ENCODE measurements at regions of chr1 and their contacts with region 1.

Region 1: GRCh38 chr1:207828485-207829158 is 76.8 kb downstream of the CD46 start:
- DNase-seq: peak; percentile 63
- H3K4me3 Mint-ChIP-seq: no peak overlapping the region
- H3K27ac Mint-ChIP-seq: peak overlapping the region; percentile 95
- H3K4me1 Mint-ChIP-seq: peaks cover 93% of the 10 kb centered on the region
- H3K27me3 Mint-ChIP-seq: peaks cover 2% of the 10 kb centered on the region

Region 2: DNA sequence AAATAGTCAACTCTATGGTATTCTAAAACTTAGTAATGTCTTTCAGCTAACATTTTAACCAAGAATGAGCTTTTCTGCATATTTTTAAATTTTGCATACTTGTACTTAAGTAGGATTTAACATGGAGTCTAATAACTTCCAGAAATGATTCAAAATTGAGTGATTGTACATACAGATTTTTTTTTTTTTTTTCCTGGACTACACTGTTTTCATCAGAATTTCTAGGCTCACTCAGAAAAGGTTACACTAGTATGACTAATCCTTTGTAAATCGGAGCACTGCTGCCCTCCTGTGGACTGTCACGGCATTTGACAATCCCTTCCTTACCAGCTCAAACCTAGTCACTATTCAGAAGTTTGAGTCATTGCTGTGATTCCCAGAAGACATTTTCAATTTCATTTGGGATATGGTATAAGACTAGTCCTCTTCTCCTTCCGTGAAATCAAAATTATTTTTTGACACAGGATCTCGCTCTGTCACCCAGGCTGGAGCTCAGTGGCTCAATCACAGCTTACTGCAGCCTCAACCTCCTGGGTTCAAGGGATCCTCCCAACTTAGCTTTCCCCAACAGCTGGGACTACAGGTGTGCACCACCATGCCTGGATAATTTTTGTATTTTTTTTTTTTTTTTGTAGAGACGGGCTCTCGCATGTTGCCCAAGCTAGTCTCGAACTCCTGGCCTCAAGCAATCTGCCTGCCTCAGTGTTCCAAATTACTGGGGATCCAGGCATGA is 31.2 kb before region 1 on chr1:
- CTCF ChIA-PET with region 1: interaction called, 10 read pairs
- POLR2A ChIA-PET with region 1: no interaction called
- DNase-seq: peak; percentile 83
- H3K4me3 Mint-ChIP-seq: no peak overlapping the region
- H3K27ac Mint-ChIP-seq: no peak overlapping the region
- H3K4me1 Mint-ChIP-seq: peaks cover 35% of the 10 kb centered on the region
- H3K27me3 Mint-ChIP-seq: no peaks in the 10 kb centered on the region

Region 3: DNA sequence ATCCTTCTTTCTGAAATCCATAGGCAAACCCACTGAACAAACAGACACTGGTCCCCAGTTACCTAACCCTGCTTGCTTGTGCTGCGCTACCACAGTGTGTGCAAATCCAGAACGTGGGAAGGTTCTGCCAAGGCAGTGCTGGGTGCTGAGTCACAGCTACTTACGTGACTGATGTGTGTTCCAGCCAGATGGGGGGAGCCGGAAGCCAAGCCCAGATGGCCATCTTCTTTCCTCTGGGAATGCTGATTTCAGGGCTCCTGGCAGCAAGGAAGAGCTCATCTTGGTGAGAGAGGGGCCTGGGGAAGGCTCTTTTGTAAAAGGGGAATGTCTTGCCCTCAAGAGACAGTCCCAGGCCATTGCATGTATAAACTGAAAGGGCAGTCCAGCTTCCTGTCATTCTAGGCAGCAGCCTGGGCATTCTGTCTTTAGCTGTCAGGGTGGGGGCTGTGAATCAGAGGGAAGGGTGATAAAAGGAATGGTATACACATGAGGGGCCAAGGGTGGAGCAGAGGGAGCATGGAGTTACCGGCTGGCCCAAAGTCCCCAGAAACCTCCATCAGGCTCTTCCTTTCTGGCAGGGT is 22.7 kb before region 1 on chr1:
- CTCF ChIA-PET with region 1: interaction called, 17 read pairs
- POLR2A ChIA-PET with region 1: no interaction called
- DNase-seq: peak; percentile 2
- H3K4me3 Mint-ChIP-seq: no peak overlapping the region
- H3K27ac Mint-ChIP-seq: peak overlapping the region; percentile 77
- H3K4me1 Mint-ChIP-seq: peaks cover 45% of the 10 kb centered on the region
- H3K27me3 Mint-ChIP-seq: no peaks in the 10 kb centered on the region

Region 4: GRCh38 chr1:207811920-207812720 is 16.5 kb before region 1 on chr1:
- CTCF ChIA-PET with region 1: interaction called, 17 read pairs
- POLR2A ChIA-PET with region 1: no interaction called
- DNase-seq: no peak
- H3K4me3 Mint-ChIP-seq: no peak overlapping the region
- H3K27ac Mint-ChIP-seq: no peak overlapping the region
- H3K4me1 Mint-ChIP-seq: peaks cover 56% of the 10 kb centered on the region
- H3K27me3 Mint-ChIP-seq: no peaks in the 10 kb centered on the region

Region 5: DNA sequence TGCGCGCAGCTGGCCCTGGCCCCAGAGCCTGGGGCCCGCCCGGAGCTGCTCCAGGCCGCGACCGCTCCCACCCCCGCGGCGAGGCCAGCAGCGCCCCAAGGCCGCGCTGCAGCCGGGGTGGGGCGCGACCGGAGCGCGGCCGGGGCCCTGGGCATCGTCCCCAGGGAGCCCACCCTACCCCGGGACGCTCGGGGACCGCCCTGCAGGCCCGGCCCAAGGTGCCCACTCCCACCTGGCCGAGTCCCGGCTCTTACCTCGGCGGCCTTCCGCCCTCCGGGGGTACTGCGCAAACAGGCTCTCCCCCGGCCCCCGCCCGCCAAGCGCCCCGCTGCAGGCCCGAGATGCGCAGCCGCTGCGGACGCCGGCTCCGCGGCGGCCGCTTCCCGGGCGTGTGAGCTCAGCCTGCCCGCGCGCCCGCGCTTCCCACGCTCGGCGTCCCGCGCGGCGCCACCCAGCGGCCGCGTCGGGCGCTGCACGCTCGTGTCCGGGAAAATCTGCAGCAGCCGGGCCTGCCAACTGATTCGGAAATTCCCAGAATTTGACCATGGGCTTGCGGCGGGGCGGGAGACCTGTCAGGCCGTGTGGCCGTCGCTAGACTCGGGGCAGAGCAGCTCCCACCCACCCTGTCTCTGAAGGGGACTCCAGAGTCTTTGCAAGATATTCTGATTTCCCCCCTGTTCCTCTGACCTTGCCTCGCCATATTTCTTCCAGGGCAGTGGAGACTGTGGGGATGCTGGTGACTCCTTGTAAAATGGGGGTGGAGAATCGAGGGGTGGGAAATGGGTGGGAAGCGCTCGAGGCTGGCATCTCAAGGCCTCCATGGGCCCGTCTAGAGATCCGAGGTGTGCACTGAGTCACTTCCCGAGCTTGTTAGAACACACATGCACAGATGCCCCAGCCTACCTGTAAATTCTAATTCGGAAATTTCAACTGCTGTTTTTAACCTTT is 40.4 kb after region 1 on chr1:
- CTCF ChIA-PET with region 1: interaction called, 39 read pairs
- POLR2A ChIA-PET with region 1: interaction called, 5 read pairs
- DNase-seq: peak; percentile 57
- H3K4me3 Mint-ChIP-seq: peak overlapping the region; percentile 93
- H3K27ac Mint-ChIP-seq: peak overlapping the region; percentile 95
- H3K4me1 Mint-ChIP-seq: peaks cover 85% of the 10 kb centered on the region
- H3K27me3 Mint-ChIP-seq: no peaks in the 10 kb centered on the region

Region 6: GRCh38 chr1:207885129-207886032 is 56.8 kb after region 1 on chr1:
- CTCF ChIA-PET with region 1: interaction called, 33 read pairs
- POLR2A ChIA-PET with region 1: no interaction called
- DNase-seq: peak; percentile 76
- H3K4me3 Mint-ChIP-seq: no peak overlapping the region
- H3K27ac Mint-ChIP-seq: peak overlapping the region; percentile 98
- H3K4me1 Mint-ChIP-seq: peaks cover 40% of the 10 kb centered on the region
- H3K27me3 Mint-ChIP-seq: peaks cover 2% of the 10 kb centered on the region

Region 7: DNA sequence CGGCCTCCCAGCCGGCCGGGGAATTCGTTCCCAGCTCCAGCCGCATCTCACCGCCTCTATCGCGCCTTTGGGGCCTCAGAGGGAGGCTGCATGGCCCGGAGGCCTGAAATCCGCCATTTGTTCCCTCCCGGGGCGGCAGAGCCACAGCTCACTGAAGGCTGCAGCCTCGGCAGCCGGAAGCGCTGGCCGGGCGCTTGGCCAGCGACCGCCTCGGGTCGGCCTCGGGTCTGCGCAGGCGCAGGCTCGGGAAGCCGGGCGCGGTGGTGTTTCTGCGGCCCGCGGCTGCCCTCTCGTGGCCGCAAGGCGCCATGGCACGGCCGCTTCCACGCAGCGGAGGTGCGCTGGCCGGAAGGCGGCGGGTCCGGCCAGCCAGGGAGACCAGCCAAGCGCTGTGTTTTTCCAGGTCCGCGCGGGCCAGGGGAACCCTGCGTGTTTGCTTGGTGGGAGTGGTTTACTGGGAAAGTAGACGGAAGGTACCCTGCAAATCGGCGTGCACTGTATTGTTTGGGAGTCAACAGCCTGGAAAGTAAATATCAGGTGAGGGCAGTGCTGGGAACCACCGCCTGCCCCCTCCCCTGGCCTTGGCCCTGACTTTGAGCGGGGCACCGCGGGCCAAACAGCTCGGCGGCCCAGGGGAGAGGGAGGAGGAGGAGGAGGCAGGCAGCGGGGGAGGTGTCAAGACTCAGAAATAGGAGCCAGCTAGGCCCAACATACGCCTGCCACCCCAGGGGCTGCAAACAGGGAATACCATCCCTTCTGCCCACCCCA is 135.0 kb after region 1 on chr1:
- CTCF ChIA-PET with region 1: interaction called, 15 read pairs
- POLR2A ChIA-PET with region 1: no interaction called
- DNase-seq: peak; percentile 80
- H3K4me3 Mint-ChIP-seq: peak overlapping the region; percentile 66
- H3K27ac Mint-ChIP-seq: peak overlapping the region; percentile 71
- H3K4me1 Mint-ChIP-seq: peaks cover 14% of the 10 kb centered on the region
- H3K27me3 Mint-ChIP-seq: peaks cover 40% of the 10 kb centered on the region